Activated B cell treated with CpG ODN at 0.5 μM for 24 hours (primary cell): ENCODE measurements at regions of chr15 and their contacts with region 1.

Region 1: DNA sequence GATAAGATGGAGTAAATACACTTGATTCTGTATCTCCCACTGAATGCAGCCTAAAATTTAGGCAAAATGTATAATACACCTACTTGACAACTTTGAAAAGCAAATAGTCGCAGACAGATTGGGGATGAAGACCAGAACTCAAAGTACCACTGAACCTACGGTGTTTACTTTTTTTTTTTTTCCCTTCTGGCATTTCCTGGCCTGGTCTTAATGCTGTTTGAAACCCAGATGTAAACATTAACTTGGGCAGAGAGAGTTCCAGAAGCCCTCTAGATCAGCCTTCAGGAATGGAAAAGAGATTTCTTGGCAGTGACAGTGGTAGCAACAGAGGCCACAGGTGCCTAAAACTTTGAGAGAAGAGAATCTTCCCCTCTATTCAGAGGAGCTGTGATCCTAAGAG is 27.8 kb downstream of the ALPK3 start:
- DNase-seq: no peak
- ATAC-seq: no peak
- H3K4me3 Mint-ChIP-seq: no peak overlapping the region
- H3K27ac Mint-ChIP-seq: no peak overlapping the region
- H3K4me1 Mint-ChIP-seq: no peaks in the 10 kb centered on the region
- H3K27me3 Mint-ChIP-seq: no peaks in the 10 kb centered on the region
- CTCF ChIP-seq: no peak

Region 2: DNA sequence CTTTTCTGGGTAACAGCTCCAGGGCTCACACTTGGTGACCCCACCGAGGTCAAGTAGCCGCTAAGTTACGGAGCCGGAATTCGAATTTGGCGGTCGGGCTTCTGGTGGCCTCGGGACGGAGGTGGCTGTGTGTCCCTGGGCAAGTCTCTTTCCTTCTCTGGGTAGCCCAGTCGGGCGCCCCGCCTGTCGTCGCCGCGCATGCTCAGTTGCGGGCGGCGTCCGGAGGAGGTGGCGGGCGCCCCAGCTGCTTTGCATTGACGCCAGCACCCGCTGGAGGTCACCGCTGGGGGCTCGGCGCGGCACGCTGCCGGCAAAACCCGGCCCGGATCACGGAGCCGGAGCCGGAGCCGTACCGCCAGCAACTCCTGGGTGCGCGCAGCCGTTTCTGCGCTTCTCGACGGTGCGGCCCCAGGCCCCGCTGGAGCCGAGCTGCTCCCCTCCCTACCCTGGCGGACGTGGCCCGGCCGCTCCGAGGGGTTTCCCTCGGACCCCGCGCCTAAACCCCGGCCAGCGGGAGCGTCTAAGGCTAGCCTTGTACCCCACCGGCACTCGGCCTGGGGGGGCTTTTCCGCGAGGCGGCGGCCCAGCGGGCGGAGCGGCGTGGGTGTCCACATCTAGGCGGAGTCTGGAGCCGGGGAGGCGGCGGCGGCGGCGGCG is 136.2 kb after region 1 on chr15:
- CTCF ChIA-PET with region 1: no interaction called
- POLR2A ChIA-PET with region 1: no interaction called
- intact Hi-C with region 1: no loop called
- DNase-seq: peak; percentile 98
- ATAC-seq: peak; percentile 78
- H3K4me3 Mint-ChIP-seq: peak overlapping the region; percentile 94
- H3K27ac Mint-ChIP-seq: peak overlapping the region; percentile 93
- H3K4me1 Mint-ChIP-seq: peaks cover 39% of the 10 kb centered on the region
- H3K27me3 Mint-ChIP-seq: no peaks in the 10 kb centered on the region
- CTCF ChIP-seq: no peak

Region 3: DNA sequence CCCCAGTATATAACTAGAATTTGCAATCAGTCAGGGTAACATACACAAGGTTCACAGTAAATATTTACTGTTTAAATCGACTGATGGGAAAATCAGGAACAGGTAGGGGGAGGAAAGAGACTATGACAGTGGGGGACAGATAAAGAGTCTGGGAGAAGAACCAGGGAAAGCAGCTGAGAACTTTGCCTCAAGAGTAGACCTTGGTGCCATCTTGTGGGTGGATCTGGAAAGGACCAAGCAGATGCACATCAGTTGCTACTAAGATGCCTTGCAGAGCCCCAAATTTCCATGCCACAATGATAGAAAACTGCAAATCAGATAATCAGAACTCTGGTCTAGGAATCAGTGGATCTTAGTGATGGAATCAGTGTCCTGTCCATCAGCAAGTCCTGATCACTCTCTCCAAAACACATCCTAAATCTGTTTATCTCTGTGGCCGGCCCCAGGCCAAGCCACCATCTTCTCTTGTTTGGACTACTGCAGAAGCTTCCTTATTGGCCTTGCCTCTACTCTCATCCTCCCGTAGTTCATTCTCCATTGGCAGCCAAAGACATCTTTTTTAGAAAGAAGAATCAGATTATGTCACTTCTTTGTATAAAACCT is 199.4 kb after region 1 on chr15:
- CTCF ChIA-PET with region 1: no interaction called
- POLR2A ChIA-PET with region 1: no interaction called
- intact Hi-C with region 1: loop called (anchors 1 kb)
- DNase-seq: no peak
- ATAC-seq: peak; percentile 56
- H3K4me3 Mint-ChIP-seq: no peak overlapping the region
- H3K27ac Mint-ChIP-seq: no peak overlapping the region
- H3K4me1 Mint-ChIP-seq: peaks cover 31% of the 10 kb centered on the region
- H3K27me3 Mint-ChIP-seq: no peaks in the 10 kb centered on the region
- CTCF ChIP-seq: no peak